Common myeloid progenitor, CD34-positive (primary cell): ENCODE measurements at regions of chr12 and their contacts with region 1.

Region 1: GRCh38 chr12:27462151-27462694 is 15.7 kb downstream of the SMCO2 start:
- DNase-seq: peak in 2 of 3 donors; percentile 30 to 33
- H3K4me3 ChIP-seq: peak overlapping the region in 2 of 7 experiments; percentile 52 to 55
- H3K27ac ChIP-seq: peak overlapping the region; percentile 36 to 93
- H3K4me1 ChIP-seq: peaks cover 12 to 49% (median 43%) of the 10 kb centered on the region in 4 experiments
- H3K27me3 ChIP-seq: no peaks in the 10 kb centered on the region

Region 2: DNA sequence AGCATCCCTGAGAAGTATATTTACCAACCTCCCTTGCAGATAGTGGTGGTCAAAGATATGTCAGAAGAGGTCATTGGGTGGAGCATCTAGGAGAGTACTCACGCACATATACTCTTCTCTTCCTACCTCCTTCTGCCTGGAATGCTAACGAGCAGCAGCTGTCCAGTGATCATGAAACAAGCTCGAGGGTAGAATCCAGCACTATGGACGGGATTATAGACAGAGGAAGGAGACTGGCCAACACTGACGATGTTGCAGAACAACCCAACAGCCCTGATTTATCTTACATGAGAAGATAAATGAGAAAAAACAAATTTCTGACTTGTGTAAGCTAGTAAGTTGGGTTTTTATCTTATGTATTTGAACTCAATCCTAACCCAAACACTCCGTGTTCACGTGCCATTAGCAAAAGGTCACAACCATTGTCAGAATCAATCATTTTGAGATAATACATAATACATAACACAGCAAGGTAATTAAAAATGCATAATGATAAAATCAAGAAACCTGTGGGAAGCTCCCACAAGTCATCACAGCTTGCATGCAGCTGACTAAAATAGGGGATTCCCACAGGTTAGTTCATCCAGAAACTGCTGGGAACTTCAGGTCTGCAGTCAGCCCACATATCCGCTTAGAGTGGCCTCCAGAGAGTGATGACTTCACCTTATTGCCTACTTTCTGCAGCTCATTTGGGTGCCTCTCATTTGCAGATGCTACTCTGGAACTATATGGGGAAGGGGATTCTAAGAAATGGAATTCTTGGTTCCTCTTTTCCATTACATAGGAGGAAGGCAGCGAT is 254.4 kb before region 1 on chr12:
- CTCF ChIA-PET with region 1: no interaction called
- POLR2A ChIA-PET with region 1: no interaction called
- DNase-seq: no peak
- H3K4me3 ChIP-seq: no peak overlapping the region
- H3K27ac ChIP-seq: no peak overlapping the region
- H3K4me1 ChIP-seq: no peaks in the 10 kb centered on the region
- H3K27me3 ChIP-seq: no peaks in the 10 kb centered on the region

Region 3: DNA sequence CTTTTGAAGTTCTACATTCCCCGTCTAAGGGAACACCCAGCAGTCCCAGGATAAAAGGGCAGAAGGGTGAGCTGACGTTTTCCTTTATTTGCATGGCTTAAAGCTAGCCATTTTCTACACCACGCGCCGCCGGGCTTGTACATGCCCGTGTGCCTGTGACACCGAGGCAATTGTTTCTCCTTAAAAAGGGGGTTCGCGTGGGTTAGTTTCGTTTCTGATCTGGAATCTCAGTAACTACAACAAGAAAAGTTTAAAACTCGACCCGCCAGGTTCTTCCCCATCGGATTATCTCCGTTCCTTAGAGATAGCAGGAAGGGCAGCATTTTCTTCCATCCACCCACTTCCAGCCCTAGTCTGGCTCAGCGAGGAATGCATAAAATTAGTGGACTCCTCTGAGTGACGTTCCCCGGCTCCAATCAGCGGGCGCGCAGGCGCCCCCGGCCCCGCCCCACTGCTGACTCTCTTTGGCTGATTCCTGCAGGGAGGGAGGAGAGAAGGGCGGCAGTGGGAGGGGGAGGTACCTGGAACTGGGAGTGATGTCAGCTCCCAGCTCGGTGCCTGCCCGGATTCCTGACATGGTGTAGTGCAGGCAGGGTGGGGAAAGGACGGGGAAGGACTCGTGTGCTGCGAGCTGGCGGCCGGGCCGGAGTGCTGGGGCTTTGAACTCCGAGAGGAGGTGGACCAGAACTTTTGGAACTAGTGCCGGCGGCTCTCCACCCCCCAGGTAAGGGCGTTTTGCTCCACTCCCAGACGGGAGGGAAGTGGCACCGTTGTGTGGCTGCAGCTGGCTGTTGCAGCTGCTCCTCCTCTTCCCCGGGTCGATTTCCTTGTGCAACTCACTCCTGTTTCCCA is 61.6 kb after region 1 on chr12 and contains the start of gene PPFIBP1:
- CTCF ChIA-PET with region 1: no interaction called
- POLR2A ChIA-PET with region 1: interaction called, 11 read pairs
- DNase-seq: peak; percentile 96 to 97 (median 96)
- H3K4me3 ChIP-seq: peak within 1 kb of the TSS; percentile 79 to 99 (median 92)
- H3K27ac ChIP-seq: peak within 1 kb of the TSS; percentile 59 to 80
- H3K4me1 ChIP-seq: peaks cover 11 to 28% (median 19%) of the 10 kb centered on the region in 4 experiments
- H3K27me3 ChIP-seq: no peaks in the 10 kb centered on the region